ENCODE measurements at regions of chr1 and their contacts with region 1.

Region 1: GRCh38 chr1:115609021-115609420 is 32.7 kb upstream of the VANGL1 start:
- DNase-seq: no peak
- ATAC-seq: no peak
- H3K4me3 Mint-ChIP-seq: no peak overlapping the region
- H3K27ac Mint-ChIP-seq: no peak overlapping the region
- H3K4me1 Mint-ChIP-seq: peaks cover 6% of the 10 kb centered on the region
- H3K27me3 Mint-ChIP-seq: no peaks in the 10 kb centered on the region
- CTCF ChIP-seq: no peak

Region 2: GRCh38 chr1:115642168-115643072 is 33.4 kb after region 1 on chr1:
- CTCF ChIA-PET with region 1: interaction called, 10 read pairs
- POLR2A ChIA-PET with region 1: no interaction called
- DNase-seq: peak; percentile 61
- ATAC-seq: peak; percentile 36
- H3K4me3 Mint-ChIP-seq: peak overlapping the region; percentile 83
- H3K27ac Mint-ChIP-seq: peak overlapping the region; percentile 68
- H3K4me1 Mint-ChIP-seq: peaks cover 35% of the 10 kb centered on the region
- H3K27me3 Mint-ChIP-seq: peaks cover 17% of the 10 kb centered on the region
- CTCF ChIP-seq: no peak

Region 3: GRCh38 chr1:115717541-115717940 is 108.5 kb after region 1 on chr1:
- CTCF ChIA-PET with region 1: interaction called, 21 read pairs
- POLR2A ChIA-PET with region 1: no interaction called
- DNase-seq: peak; percentile 77
- ATAC-seq: peak; percentile 53
- H3K4me3 Mint-ChIP-seq: no peak overlapping the region
- H3K27ac Mint-ChIP-seq: no peak overlapping the region
- H3K4me1 Mint-ChIP-seq: peaks cover 23% of the 10 kb centered on the region
- H3K27me3 Mint-ChIP-seq: peaks cover 3% of the 10 kb centered on the region; the same call in 1 of the 2 replicates
- CTCF ChIP-seq: peak; percentile 66

Region 4: GRCh38 chr1:115744646-115745275 is 135.7 kb after region 1 on chr1:
- CTCF ChIA-PET with region 1: no interaction called
- POLR2A ChIA-PET with region 1: no interaction called
- DNase-seq: no peak
- ATAC-seq: no peak
- H3K4me3 Mint-ChIP-seq: no peak overlapping the region
- H3K27ac Mint-ChIP-seq: no peak overlapping the region
- H3K4me1 Mint-ChIP-seq: peaks cover 11% of the 10 kb centered on the region
- H3K27me3 Mint-ChIP-seq: no peaks in the 10 kb centered on the region
- CTCF ChIP-seq: no peak

Region 5: DNA sequence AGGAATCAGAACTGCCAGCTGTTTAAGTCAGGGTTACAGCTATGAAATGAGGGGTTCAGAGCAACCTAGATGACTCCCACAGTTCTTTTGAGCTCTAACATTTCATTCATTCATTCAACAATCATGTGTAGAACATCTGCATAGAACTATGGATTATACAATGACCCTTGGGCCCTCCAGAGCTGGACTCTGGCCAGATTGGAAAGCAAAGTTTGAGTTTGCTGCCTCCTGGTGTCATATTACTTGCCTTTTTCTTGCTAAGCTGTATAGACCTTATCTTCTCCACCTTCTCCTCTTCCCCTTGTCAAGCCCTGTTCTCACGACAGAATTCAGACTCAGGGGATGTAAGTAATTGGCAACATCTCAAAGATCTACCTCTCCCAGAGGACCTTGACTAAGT is 155.5 kb after region 1 on chr1:
- CTCF ChIA-PET with region 1: interaction called, 25 read pairs
- POLR2A ChIA-PET with region 1: no interaction called
- DNase-seq: no peak
- ATAC-seq: peak; percentile 57; the same call in 1 of the 2 replicates
- H3K4me3 Mint-ChIP-seq: no peak overlapping the region
- H3K27ac Mint-ChIP-seq: no peak overlapping the region
- H3K4me1 Mint-ChIP-seq: peaks cover 13% of the 10 kb centered on the region
- H3K27me3 Mint-ChIP-seq: no peaks in the 10 kb centered on the region
- CTCF ChIP-seq: no peak

Region 6: DNA sequence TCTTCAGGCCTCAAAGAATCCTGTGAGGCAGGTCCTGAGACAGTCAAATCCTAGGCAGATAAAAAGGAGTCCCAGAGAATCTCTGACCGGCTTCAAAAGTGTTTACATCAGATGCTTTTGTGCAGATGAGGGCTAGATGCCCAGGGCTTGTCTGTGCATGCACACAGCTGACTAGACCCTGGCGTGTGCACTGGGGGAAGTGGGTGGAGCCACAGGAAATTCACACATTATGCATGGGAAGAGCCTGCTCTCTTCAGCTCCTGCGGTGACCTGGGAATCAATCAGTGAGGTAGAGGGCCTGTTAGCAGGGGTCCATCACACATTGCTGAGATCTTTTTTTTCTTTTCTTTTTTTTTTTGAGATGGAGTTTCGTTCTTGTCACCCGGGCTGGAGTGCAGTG is 268.5 kb after region 1 on chr1:
- CTCF ChIA-PET with region 1: no interaction called
- POLR2A ChIA-PET with region 1: no interaction called
- DNase-seq: peak; percentile 23
- ATAC-seq: peak; percentile 89
- H3K4me3 Mint-ChIP-seq: no peak overlapping the region
- H3K27ac Mint-ChIP-seq: no peak overlapping the region
- H3K4me1 Mint-ChIP-seq: peaks cover 34% of the 10 kb centered on the region
- H3K27me3 Mint-ChIP-seq: peaks cover 2% of the 10 kb centered on the region
- CTCF ChIP-seq: no peak

Measured in WTC11 (cell line).